ENCODE measurements at regions of chr20 and their contacts with region 1.

Region 1: DNA sequence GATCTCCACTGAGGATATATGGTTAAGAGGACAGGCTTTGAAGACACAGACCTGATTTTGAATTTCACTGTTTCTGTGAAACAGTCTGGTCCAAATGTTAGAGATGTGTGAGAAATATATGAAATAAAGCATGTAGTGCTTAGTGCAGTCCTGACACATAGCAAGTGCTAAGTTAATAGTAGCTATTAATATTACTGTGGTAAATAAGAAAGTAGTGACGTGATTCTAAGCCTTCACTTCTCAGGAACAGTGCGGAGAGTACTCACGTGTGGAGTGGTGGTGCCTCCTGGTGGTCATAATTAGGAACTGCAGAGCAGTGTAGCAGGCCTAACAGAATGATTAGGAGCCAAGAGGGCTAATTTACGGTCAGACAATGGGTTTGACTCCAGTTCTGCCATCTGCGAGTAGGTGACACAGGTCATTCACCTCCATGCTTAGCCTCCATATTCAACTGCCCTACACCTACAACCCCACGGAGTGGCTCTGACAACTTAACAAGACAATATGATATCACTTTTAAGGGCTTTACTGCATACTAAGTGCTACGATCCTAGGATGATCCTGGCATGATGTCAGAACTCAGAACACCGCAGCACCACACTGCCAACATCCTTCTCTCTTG is 106.2 kb downstream of the JPH2 start:
- DNase-seq: peak; percentile 79
- H3K4me3 ChIP-seq: no peak overlapping the region
- H3K27ac ChIP-seq: no peak overlapping the region
- H3K4me1 ChIP-seq: no peaks in the 10 kb centered on the region
- H3K27me3 ChIP-seq: no peaks in the 10 kb centered on the region
- CTCF ChIP-seq: peak; percentile 81 to 98
- POLR2A ChIP-seq: no peak

Region 2: GRCh38 chr20:43749734-43750294 is 330.9 kb before region 1 on chr20:
- CTCF ChIA-PET with region 1: interaction called, 191 read pairs
- POLR2A ChIA-PET with region 1: no interaction called
- dilution Hi-C with region 1: no loop called
- intact Hi-C with region 1: loop called (anchors 1 kb)
- DNase-seq: peak; percentile 37
- H3K4me3 ChIP-seq: no peak overlapping the region
- H3K27ac ChIP-seq: no peak overlapping the region
- H3K4me1 ChIP-seq: peaks cover 12% of the 10 kb centered on the region
- H3K27me3 ChIP-seq: no peaks in the 10 kb centered on the region
- CTCF ChIP-seq: peak; percentile 99
- POLR2A ChIP-seq: no peak

Region 3: DNA sequence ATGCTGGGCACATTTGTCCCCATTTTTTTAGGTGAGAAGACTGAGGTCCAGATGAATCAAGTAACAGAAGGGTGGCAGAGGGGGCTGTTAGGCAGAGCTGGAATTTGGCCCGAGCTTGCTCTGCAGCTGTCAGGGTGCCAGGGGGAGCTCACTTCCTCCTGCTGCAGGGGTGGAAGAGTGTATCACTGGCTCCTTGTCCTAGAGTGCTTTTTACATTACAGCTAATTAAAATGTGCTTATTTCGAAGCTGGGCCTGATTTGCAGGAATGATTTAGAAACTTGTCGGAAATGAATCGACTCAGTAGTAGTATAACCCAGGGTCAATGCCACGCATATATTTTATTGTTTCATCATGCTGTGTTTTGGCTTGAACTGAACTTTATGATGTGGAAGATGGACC is 155.0 kb before region 1 on chr20:
- CTCF ChIA-PET with region 1: interaction called, 13 read pairs
- POLR2A ChIA-PET with region 1: no interaction called
- dilution Hi-C with region 1: no loop called
- intact Hi-C with region 1: no loop called
- DNase-seq: peak; percentile 51
- H3K4me3 ChIP-seq: no peak overlapping the region
- H3K27ac ChIP-seq: no peak overlapping the region
- H3K4me1 ChIP-seq: no peaks in the 10 kb centered on the region
- H3K27me3 ChIP-seq: peaks cover 4 to 7% of the 10 kb centered on the region in 2 experiments
- CTCF ChIP-seq: no peak
- POLR2A ChIP-seq: no peak

Region 4: DNA sequence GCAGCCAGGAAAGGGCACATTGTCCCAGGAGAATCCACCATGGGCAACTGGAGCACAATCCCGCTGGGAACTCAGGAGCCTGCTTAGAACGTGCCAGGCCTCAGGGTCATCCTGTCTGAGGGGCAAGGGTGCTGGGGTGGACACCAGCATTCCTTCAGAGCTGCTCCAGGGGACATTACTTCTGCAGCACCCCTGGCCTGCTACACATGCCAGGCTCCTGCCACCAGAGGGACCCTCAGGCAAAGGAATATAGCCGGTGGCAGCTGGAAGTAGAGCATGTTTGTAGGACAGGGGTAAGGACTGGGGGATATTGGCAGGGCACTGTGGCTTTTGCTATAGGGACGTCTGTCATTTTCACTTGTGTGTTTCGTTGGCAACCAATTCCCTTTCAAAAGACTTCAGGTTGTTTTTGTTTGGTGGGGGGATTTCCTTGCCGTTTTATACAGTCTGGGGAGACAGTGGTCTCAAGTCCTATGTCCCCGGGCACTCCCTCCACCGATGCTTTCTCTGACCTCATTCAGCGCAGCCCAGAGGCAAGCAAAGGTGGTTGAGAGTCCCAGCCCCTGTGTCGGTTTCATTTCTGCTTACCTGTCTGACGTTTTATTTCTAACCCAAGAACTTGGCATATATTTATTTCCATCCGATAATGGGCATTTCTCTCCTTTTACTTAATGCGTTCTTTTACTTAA is 24.6 kb before region 1 on chr20:
- CTCF ChIA-PET with region 1: interaction called, 34 read pairs
- POLR2A ChIA-PET with region 1: no interaction called
- dilution Hi-C with region 1: no loop called
- intact Hi-C with region 1: loop called (anchors 1 kb)
- DNase-seq: peak; percentile 26
- H3K4me3 ChIP-seq: no peak overlapping the region
- H3K27ac ChIP-seq: no peak overlapping the region
- H3K4me1 ChIP-seq: no peaks in the 10 kb centered on the region
- H3K27me3 ChIP-seq: no peaks in the 10 kb centered on the region
- CTCF ChIP-seq: peak; percentile 43 to 68
- POLR2A ChIP-seq: no peak

Region 5: DNA sequence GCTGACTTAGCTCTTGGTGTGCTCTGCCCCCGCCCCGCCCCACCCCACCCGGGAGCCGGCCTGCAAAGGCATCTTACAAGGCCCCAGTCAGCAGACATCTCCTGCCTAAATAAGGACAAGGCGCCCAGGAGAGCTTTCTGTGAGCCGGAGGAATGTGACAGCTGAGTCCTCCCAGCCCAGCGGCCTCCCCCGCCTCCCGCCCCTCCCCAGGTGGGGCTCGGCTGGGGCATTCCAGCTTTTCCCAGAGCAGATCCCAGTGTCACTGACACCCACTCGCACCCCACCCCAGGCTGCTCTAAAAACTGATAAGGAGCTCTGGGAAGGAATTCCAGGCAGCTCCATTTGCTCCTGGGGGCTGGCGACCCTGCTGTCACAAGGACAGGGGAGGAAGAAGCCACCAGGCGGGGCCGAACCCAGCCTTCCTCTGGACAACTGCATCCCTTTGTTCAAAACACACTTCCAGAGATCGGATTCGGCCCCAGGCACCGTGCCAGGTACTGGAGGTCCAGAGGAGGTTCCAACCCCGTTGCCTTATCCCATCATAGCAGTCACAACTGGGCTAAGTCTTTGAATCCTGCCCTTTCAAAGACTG is 56.5 kb after region 1 on chr20:
- CTCF ChIA-PET with region 1: no interaction called
- POLR2A ChIA-PET with region 1: no interaction called
- dilution Hi-C with region 1: no loop called
- intact Hi-C with region 1: no loop called
- DNase-seq: no peak
- H3K4me3 ChIP-seq: no peak overlapping the region
- H3K27ac ChIP-seq: no peak overlapping the region
- H3K4me1 ChIP-seq: no peaks in the 10 kb centered on the region
- H3K27me3 ChIP-seq: peaks cover 5% of the 10 kb centered on the region in 2 experiments
- CTCF ChIP-seq: no peak
- POLR2A ChIP-seq: no peak

Region 6: GRCh38 chr20:44271915-44272663 is 191.3 kb after region 1 on chr20:
- CTCF ChIA-PET with region 1: no interaction called
- POLR2A ChIA-PET with region 1: no interaction called
- dilution Hi-C with region 1: no loop called
- intact Hi-C with region 1: no loop called
- DNase-seq: no peak
- H3K4me3 ChIP-seq: no peak overlapping the region
- H3K27ac ChIP-seq: no peak overlapping the region
- H3K4me1 ChIP-seq: no peaks in the 10 kb centered on the region
- H3K27me3 ChIP-seq: no peaks in the 10 kb centered on the region
- CTCF ChIP-seq: peak in 1 of 2 donors; percentile 19
- POLR2A ChIP-seq: no peak